HepG2 (cell line): ENCODE measurements at regions of chr4 and their contacts with region 1.

Region 1: DNA sequence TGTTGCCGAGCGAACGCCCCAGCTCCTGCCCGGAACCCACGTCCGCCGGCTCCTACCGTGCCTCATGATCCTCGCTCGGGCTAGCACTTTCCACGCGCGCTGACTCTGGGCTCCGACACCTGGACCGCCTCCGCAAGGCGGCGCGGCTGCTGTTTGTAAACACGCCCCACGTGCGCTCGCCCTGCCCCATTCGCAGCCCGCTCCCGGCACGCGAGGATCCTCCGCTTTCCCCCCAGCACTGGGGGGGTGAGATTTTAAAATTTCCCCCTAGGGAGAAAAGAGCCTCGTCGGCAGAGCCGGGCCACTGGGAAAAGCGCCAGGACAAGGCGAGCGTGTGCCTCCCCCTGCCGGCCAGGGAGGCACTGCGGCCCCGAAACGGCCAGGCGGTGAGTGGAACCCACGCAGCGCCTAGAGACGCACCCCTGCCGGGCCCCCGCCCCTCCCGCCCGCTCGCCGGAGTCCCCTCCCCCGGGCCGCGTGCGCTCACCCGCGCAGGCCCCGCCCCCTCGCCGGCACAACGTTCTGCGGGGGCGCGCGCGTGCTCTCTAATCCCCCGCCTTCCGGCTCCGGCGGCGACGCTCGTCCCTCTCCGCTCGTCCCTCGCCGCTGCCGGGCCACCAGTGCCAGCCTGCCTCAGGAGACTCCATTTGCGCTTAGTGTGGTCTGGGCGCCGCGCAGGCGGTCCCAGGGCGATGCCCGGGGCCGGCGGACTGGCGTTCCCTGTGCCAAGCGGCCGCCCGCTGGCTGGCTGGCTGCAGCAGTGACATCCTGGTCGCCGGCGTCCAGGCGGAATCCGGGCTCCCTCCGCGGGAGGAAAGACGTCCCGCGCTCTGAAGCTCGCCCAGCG is at the start of gene TIGD2:
- DNase-seq: peak; percentile 69
- ATAC-seq: peak; percentile 84
- H3K4me3 ChIP-seq: peak within 1 kb of the TSS; percentile 78 to 83 (median 79)
- H3K27ac ChIP-seq: peak within 1 kb of the TSS; percentile 87
- H3K4me1 ChIP-seq: peaks cover 49% of the 10 kb centered on the region
- H3K27me3 ChIP-seq: peaks cover 0 to 4% of the 10 kb centered on the region in 2 experiments; a peak in 1 of 5 replicates
- CTCF ChIP-seq: peak; percentile 77
- EP300 ChIP-seq: no peak
- POLR2A ChIP-seq: peak; percentile 73 to 88
- RAD21 ChIP-seq: peak; percentile 60
- total RNA-seq, gene TIGD2: 15.5 and 16.7 TPM in 2 replicates

Region 2: DNA sequence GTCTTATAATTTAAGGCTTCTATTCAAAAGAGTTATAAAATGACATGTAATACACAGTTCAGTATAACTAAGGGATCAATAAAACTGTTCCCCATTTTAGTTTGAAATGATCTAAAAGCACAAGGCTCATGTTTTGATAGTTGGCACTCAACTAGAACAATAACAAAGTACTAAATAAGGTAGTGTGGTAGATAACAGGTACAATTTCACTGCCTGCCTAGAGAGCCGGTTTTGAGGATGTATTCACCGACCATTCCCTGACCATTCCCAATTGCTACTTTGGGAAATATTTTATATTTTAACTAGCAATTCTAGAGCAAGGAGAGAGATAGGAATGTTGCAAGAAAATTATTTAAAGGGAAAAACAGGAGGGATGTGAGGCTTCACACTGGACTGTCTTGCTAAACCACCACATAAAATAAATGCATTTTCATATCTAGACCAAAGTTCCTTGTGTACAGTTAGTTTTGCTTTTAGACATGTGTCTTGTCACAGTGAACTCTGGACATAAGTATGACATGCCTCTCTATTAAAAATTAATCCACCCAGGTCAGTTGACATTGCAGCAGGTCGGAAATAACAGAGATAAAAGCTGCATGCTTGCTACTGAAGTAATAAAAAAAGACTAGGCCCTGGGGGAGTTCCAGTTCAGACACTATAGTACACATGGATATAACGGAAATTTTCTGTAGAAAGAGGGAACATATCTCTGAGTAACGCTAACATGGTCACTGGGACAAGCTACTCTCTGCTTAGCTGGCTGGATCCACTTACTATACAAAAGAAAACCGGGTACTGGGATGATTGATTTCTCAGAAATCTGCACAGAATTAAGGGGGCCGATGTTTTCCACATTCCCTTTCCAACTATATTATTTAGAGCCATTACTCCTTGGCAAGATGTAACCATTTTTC is 357.3 kb before region 1 on chr4:
- CTCF ChIA-PET with region 1: no interaction called
- POLR2A ChIA-PET with region 1: no interaction called
- in situ Hi-C with region 1: no loop called
- intact Hi-C with region 1: loop called (anchors 2 kb)
- DNase-seq: peak; percentile 94
- ATAC-seq: peak; percentile 90
- H3K4me3 ChIP-seq: peak overlapping the region in 1 of 3 experiments; percentile 25; a peak in 1 of 6 replicates
- H3K27ac ChIP-seq: peak overlapping the region; percentile 84
- H3K4me1 ChIP-seq: peaks cover 71% of the 10 kb centered on the region
- H3K27me3 ChIP-seq: no peaks in the 10 kb centered on the region
- CTCF ChIP-seq: no peak
- EP300 ChIP-seq: peak in 1 of 2 experiments; percentile 83; a peak in 3 of 4 replicates
- POLR2A ChIP-seq: peak; percentile 28 to 35; a peak in 2 of 4 replicates
- RAD21 ChIP-seq: no peak

Region 3: DNA sequence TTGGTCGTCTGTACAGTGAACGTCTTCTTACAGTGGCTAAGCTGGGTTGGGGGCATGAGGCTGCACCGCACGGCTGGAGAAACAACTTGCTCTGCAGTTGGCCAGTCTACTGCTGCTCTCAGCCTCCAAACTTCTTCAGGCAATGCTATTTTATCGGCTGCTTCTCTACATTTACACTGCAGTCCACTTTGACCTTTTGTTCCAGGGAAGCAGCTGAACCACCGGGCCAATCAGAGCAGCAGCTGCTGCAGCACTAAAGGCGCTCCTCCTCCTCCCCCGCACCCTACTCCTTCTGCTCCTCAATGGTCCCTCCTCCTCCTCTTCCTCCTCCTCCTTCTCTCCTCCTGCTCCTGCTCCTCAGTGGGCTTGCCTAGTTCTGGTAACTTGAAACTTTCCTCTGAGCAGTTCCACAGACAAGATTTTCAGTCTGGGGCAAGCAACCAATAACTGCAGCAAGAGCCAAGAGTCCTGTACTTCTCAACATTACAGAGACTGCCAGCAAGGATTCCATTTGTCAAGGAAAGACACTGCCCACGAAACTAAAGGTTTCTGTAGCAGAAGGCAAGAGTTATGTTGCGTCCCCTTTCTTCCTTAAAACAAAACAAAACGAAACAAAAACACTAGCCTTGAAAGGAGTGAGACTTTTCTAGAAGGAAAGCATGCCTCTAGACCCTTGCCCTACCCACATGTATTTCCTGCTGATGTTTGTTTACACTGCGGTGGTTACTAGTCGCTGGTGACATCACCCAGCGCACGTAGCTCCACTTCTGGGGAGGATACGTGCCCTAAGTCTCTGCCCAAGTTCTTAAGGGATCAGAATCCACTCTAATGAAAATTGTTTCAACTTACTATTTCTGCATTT is 287.9 kb before region 1 on chr4:
- CTCF ChIA-PET with region 1: interaction called, 4 read pairs
- POLR2A ChIA-PET with region 1: no interaction called
- in situ Hi-C with region 1: no loop called
- intact Hi-C with region 1: loop called (anchors 5 kb)
- DNase-seq: peak; percentile 61
- ATAC-seq: peak; percentile 97
- H3K4me3 ChIP-seq: peak overlapping the region; percentile 60 to 78 (median 76)
- H3K27ac ChIP-seq: peak overlapping the region; percentile 64
- H3K4me1 ChIP-seq: peaks cover 57% of the 10 kb centered on the region
- H3K27me3 ChIP-seq: no peaks in the 10 kb centered on the region; a peak in 1 of 5 replicates
- CTCF ChIP-seq: no peak
- EP300 ChIP-seq: peak in 1 of 2 experiments; percentile 64; a peak in 1 of 4 replicates
- POLR2A ChIP-seq: peak; percentile 34 to 95; a peak in 3 of 4 replicates
- RAD21 ChIP-seq: no peak

Region 4: GRCh38 chr4:89158884-89159503 is 47.8 kb after region 1 on chr4:
- CTCF ChIA-PET with region 1: interaction called, 3 read pairs
- POLR2A ChIA-PET with region 1: no interaction called
- in situ Hi-C with region 1: no loop called
- intact Hi-C with region 1: loop called (anchors 1 kb)
- DNase-seq: peak; percentile 6
- ATAC-seq: peak; percentile 22; the same call in 1 of the 3 replicates
- H3K4me3 ChIP-seq: no peak overlapping the region
- H3K27ac ChIP-seq: no peak overlapping the region
- H3K4me1 ChIP-seq: no peaks in the 10 kb centered on the region
- H3K27me3 ChIP-seq: no peaks in the 10 kb centered on the region
- CTCF ChIP-seq: peak; percentile 66
- EP300 ChIP-seq: no peak
- POLR2A ChIP-seq: no peak
- RAD21 ChIP-seq: no peak